ENCODE measurements at regions of chr21 and their contacts with region 1.

Region 1: GRCh38 chr21:43884012-43884860 is 19.2 kb downstream of the AGPAT3 start:
- DNase-seq: peak in 1 of 2 donors; percentile 45
- H3K4me3 ChIP-seq: no peak overlapping the region
- H3K27ac ChIP-seq: no peak overlapping the region
- H3K4me1 ChIP-seq: peaks cover 0 to 32% (median 15%) of the 10 kb centered on the region in 4 donors
- H3K27me3 ChIP-seq: no peaks in the 10 kb centered on the region
- CTCF ChIP-seq: no peak

Region 2: DNA sequence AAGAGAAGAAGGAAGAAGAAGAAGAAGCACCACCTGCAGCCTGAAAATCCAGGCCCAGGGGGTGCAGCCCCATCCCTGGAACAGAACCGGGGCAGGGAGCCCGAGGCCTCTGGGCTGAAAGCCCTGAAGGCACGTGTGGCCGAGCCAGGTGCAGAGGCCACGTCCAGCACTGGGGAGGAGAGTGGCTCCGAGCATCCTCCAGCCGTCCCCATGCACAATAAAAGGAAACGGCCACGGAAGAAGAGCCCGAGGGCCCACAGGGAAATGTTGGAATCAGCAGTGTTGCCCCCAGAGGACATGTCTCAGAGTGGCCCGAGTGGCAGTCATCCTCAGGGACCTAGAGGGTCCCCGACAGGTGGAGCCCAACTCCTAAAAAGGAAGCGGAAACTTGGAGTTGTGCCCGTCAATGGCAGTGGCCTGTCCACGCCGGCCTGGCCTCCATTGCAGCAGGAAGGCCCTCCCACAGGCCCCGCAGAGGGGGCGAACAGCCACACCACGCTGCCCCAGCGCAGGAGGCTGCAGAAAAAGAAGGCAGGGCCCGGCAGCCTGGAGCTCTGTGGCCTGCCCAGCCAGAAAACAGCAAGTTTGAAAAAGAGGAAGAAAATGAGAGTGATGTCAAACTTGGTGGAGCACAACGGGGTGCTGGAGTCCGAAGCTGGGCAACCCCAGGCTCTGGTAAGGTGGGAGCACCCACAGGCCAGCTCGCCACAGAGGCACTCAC is 196.5 kb before region 1 on chr21:
- intact Hi-C with region 1: no loop called
- DNase-seq: no peak
- H3K4me3 ChIP-seq: no peak overlapping the region
- H3K27ac ChIP-seq: no peak overlapping the region
- H3K4me1 ChIP-seq: no peaks in the 10 kb centered on the region
- H3K27me3 ChIP-seq: no peaks in the 10 kb centered on the region
- CTCF ChIP-seq: no peak

Region 3: GRCh38 chr21:43703035-43703880 is 181.0 kb before region 1 on chr21:
- intact Hi-C with region 1: no loop called
- DNase-seq: no peak
- H3K4me3 ChIP-seq: peak overlapping the region in 1 of 2 donors; percentile 5
- H3K27ac ChIP-seq: peak overlapping the region; percentile 62 to 75
- H3K4me1 ChIP-seq: peaks cover 0 to 43% (median 30%) of the 10 kb centered on the region in 4 donors
- H3K27me3 ChIP-seq: no peaks in the 10 kb centered on the region
- CTCF ChIP-seq: no peak

Region 4: GRCh38 chr21:43825681-43826622 is 58.3 kb before region 1 on chr21:
- intact Hi-C with region 1: loop called (anchors 10 kb)
- DNase-seq: no peak
- H3K4me3 ChIP-seq: no peak overlapping the region
- H3K27ac ChIP-seq: no peak overlapping the region
- H3K4me1 ChIP-seq: no peaks in the 10 kb centered on the region
- H3K27me3 ChIP-seq: peaks cover 0 to 43% of the 10 kb centered on the region in 2 donors
- CTCF ChIP-seq: no peak